ENCODE measurements at regions of chr13 and their contacts with region 1.

Region 1: DNA sequence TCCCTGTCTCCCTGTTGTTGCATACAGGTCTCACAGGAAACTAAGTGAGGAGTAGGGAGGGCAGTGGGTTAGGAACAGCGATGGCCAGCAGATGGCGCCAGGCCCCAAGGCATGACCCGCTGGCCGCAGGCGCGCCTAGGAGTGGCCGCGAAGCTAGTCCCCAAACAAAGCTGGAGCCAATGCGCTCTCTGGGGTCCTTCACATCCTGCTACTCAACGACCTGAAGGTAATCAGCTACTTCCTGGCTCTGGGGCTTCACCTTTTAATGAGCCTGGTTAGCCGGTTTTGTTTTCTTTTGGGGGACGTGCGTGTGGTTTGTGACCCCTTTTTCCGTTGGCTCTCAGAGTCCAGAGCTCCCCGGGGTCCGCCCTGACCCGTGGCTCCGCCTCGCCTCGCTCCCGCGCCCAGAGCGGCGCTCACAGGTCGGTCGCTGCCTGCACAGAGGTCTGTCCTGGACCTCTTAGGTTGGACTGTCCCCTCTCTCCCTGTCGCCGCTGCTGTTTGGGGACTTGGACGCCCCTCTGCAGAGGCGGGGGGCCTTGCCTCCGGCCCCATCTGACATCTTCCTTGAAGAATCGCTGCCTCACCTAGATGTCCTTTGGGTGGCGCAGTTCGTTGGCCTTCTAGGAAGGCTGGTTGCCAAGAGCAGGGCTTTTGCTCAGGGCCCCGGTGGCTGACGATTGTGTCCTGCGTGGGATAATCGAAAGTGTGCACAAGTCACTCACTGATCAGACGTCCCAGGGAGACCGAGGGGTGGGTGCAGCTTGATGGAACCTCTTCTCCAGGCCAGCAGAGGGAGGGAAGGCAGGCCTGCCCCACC is 62.1 kb upstream of the GTF3A start:
- DNase-seq: peak; percentile 83
- H3K4me3 ChIP-seq: peak overlapping the region; percentile 61
- H3K27ac ChIP-seq: no peak overlapping the region
- H3K4me1 ChIP-seq: peaks cover 9% of the 10 kb centered on the region
- H3K27me3 ChIP-seq: peaks cover 18% of the 10 kb centered on the region
- CTCF ChIP-seq: peak; percentile 94

Region 2: DNA sequence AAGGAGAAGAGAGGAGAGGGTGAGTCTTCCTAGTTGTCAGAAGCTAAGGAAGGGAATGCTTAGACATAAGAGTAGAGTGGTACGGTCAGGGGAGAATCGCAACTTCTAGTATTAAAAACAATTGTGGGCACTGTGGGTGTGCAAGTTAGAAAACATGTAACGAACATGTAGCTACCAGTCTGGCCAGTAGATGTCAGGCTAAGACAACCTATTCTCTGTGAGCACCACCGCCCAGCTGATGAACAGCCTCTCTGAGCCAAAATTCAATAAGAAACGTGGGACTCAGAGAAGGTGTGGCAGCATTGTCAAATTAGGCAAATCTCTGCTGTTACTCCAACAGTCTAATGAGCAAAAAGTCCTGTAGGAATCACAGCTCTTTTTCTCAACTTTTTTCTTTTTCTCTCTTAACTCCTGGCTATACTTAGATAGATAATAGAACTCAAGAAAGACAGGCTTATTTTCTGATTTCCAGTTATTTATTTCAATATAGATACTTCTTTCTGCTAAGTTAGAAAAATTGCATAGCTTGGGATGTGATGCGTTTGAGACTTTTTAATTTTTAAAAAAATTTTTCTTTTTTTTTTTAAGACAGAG is 376.9 kb before region 1 on chr13:
- intact Hi-C with region 1: loop called (anchors 5 kb)
- DNase-seq: no peak
- H3K4me3 ChIP-seq: no peak overlapping the region
- H3K27ac ChIP-seq: no peak overlapping the region
- H3K4me1 ChIP-seq: peaks cover 18% of the 10 kb centered on the region
- H3K27me3 ChIP-seq: no peaks in the 10 kb centered on the region
- CTCF ChIP-seq: peak; percentile 84

Region 3: GRCh38 chr13:27980280-27980998 is 618.2 kb after region 1 on chr13:
- intact Hi-C with region 1: loop called (anchors 10 kb)
- DNase-seq: no peak
- H3K4me3 ChIP-seq: no peak overlapping the region
- H3K27ac ChIP-seq: no peak overlapping the region
- H3K4me1 ChIP-seq: peaks cover 38% of the 10 kb centered on the region
- H3K27me3 ChIP-seq: peaks cover 98% of the 10 kb centered on the region
- CTCF ChIP-seq: no peak

Measured in left ventricle myocardium inferior (tissue), 1 donor.